Breast epithelium (tissue), 4 donors: ENCODE measurements at regions of chr12 and their contacts with region 1.

Region 1: GRCh38 chr12:47779301-47779942 is 6.4 kb downstream of the SLC48A1 start:
- DNase-seq: peak; percentile 84 to 93
- H3K4me3 ChIP-seq: no peak overlapping the region
- H3K27ac ChIP-seq: peak overlapping the region; percentile 43 to 65
- H3K4me1 ChIP-seq: peaks cover 22 to 45% of the 10 kb centered on the region in 2 donors
- H3K27me3 ChIP-seq: no peaks in the 10 kb centered on the region
- CTCF ChIP-seq: peak; percentile 97 to 99 (median 98)
- POLR2A ChIP-seq: no peak

Region 2: GRCh38 chr12:47725893-47726292 is 53.5 kb before region 1 on chr12:
- intact Hi-C with region 1: loop called (anchors 10 kb)
- DNase-seq: no peak
- H3K4me3 ChIP-seq: no peak overlapping the region
- H3K27ac ChIP-seq: no peak overlapping the region
- H3K4me1 ChIP-seq: no peaks in the 10 kb centered on the region
- H3K27me3 ChIP-seq: no peaks in the 10 kb centered on the region
- CTCF ChIP-seq: no peak
- POLR2A ChIP-seq: no peak

Region 3: GRCh38 chr12:47742253-47742825 is 37.1 kb before region 1 on chr12:
- intact Hi-C with region 1: loop called (anchors 5 kb)
- DNase-seq: peak in 1 of 2 donors; percentile 68
- H3K4me3 ChIP-seq: no peak overlapping the region
- H3K27ac ChIP-seq: no peak overlapping the region
- H3K4me1 ChIP-seq: peaks cover 0 to 17% of the 10 kb centered on the region in 2 donors
- H3K27me3 ChIP-seq: no peaks in the 10 kb centered on the region
- CTCF ChIP-seq: peak; percentile 93 to 99 (median 94)
- POLR2A ChIP-seq: no peak